ENCODE measurements at regions of chr1 and their contacts with region 1.

Region 1: GRCh38 chr1:207797229-207797961 is 45.5 kb downstream of the CD46 start:
- DNase-seq: peak in 1 of 2 donors; percentile 94
- H3K4me3 ChIP-seq: no peak overlapping the region
- H3K27ac ChIP-seq: peak overlapping the region in 1 of 2 donors; percentile 54
- H3K4me1 ChIP-seq: no peaks in the 10 kb centered on the region
- H3K27me3 ChIP-seq: no peaks in the 10 kb centered on the region
- CTCF ChIP-seq: peak; percentile 67 to 81 (median 79)

Region 2: GRCh38 chr1:207654320-207654719 is 143.1 kb before region 1 on chr1:
- intact Hi-C with region 1: loop called (anchors 10 kb)
- DNase-seq: no peak
- H3K4me3 ChIP-seq: no peak overlapping the region
- H3K27ac ChIP-seq: no peak overlapping the region
- H3K4me1 ChIP-seq: no peaks in the 10 kb centered on the region
- H3K27me3 ChIP-seq: no peaks in the 10 kb centered on the region
- CTCF ChIP-seq: peak in 2 of 3 experiments; percentile 13 to 19

Measured in ascending aorta (tissue), 2 donors.